ENCODE measurements at regions of chr5 and their contacts with region 1.

Region 1: DNA sequence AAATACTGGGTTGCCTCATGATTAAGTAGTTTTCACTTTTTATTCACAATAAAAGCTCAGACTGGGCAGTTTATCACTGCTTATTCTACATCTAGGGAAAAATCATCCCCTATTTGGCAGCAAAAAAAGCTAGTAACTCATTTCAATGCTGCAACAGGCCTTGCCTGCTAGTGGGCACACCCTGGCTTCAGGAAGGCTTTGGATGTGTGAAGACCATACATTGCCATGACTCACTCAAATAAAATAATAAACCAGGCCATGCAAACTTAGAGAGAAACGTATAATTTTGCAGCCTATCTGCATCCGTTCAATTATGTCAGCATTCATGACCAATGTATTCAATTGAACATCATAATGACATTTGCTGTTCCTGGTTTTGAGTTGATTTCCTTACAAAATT is 402.9 kb downstream of the PIK3R1 start:
- DNase-seq: no peak
- CTCF ChIP-seq: no peak

Region 2: DNA sequence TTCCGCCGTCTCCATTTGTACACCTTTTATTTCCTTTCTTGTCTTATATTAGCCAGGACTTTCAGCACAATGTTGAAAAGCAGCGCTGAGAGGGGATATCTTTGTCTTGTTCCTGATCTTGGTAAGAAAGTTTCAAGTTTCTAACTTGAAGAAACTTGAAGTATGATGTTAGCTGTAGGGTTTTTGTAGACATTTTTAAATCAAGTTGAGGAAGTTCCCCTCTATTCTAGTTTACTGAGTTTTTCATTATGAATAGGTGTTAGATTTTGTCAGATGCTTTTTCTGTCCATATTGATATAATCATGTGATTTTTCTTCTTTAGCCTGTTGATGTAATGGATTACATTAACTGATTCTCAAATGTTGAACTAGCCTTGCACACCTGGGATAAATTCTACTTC is 22.7 kb after region 1 on chr5:
- CTCF ChIA-PET with region 1: interaction called, 10 read pairs
- POLR2A ChIA-PET with region 1: no interaction called
- DNase-seq: no peak
- CTCF ChIP-seq: no peak

Measured in GM10248 (cell line).